Activated B cell treated with CpG ODN at 0.5 μM for 24 hours (primary cell): ENCODE measurements at regions of chrX and their contacts with region 1.

Region 1: GRCh38 chrX:9341291-9342201 is 123.3 kb upstream of the TBL1X start:
- DNase-seq: peak; percentile 51
- ATAC-seq: peak; percentile 69
- H3K4me3 Mint-ChIP-seq: peak overlapping the region; percentile 73
- H3K27ac Mint-ChIP-seq: peak overlapping the region; percentile 95
- H3K4me1 Mint-ChIP-seq: peaks cover 29% of the 10 kb centered on the region
- H3K27me3 Mint-ChIP-seq: no peaks in the 10 kb centered on the region
- CTCF ChIP-seq: no peak

Region 2: GRCh38 chrX:9091258-9091657 is 250.3 kb before region 1 on chrX:
- CTCF ChIA-PET with region 1: no interaction called
- POLR2A ChIA-PET with region 1: no interaction called
- intact Hi-C with region 1: loop called (anchors 5 kb)
- DNase-seq: peak; percentile 15
- ATAC-seq: peak; percentile 42
- H3K4me3 Mint-ChIP-seq: peak overlapping the region; percentile 15
- H3K27ac Mint-ChIP-seq: peak overlapping the region; percentile 65
- H3K4me1 Mint-ChIP-seq: peaks cover 13% of the 10 kb centered on the region
- H3K27me3 Mint-ChIP-seq: peaks cover 4% of the 10 kb centered on the region
- CTCF ChIP-seq: no peak

Region 3: GRCh38 chrX:9312922-9313867 is 28.4 kb before region 1 on chrX:
- CTCF ChIA-PET with region 1: interaction called, 4 read pairs
- POLR2A ChIA-PET with region 1: interaction called, 4 read pairs
- intact Hi-C with region 1: loop called (anchors 1 kb)
- DNase-seq: peak; percentile 39
- ATAC-seq: peak; percentile 56
- H3K4me3 Mint-ChIP-seq: no peak overlapping the region
- H3K27ac Mint-ChIP-seq: no peak overlapping the region
- H3K4me1 Mint-ChIP-seq: peaks cover 20% of the 10 kb centered on the region
- H3K27me3 Mint-ChIP-seq: no peaks in the 10 kb centered on the region
- CTCF ChIP-seq: peak; percentile 25

Region 4: GRCh38 chrX:9530848-9531274 is 189.3 kb after region 1 on chrX:
- CTCF ChIA-PET with region 1: no interaction called
- POLR2A ChIA-PET with region 1: interaction called, 3 read pairs
- intact Hi-C with region 1: loop called (anchors 5 kb)
- DNase-seq: peak; percentile 28
- ATAC-seq: peak; percentile 88
- H3K4me3 Mint-ChIP-seq: peak overlapping the region; percentile 79
- H3K27ac Mint-ChIP-seq: peak overlapping the region; percentile 80
- H3K4me1 Mint-ChIP-seq: peaks cover 73% of the 10 kb centered on the region
- H3K27me3 Mint-ChIP-seq: no peaks in the 10 kb centered on the region
- CTCF ChIP-seq: no peak

Region 5: GRCh38 chrX:9677098-9677739 is 335.7 kb after region 1 on chrX:
- CTCF ChIA-PET with region 1: no interaction called
- POLR2A ChIA-PET with region 1: interaction called, 8 read pairs
- intact Hi-C with region 1: loop called (anchors 1 kb)
- DNase-seq: no peak
- ATAC-seq: peak; percentile 89
- H3K4me3 Mint-ChIP-seq: peak overlapping the region; percentile 58
- H3K27ac Mint-ChIP-seq: peak overlapping the region; percentile 89
- H3K4me1 Mint-ChIP-seq: peaks cover 50% of the 10 kb centered on the region
- H3K27me3 Mint-ChIP-seq: no peaks in the 10 kb centered on the region
- CTCF ChIP-seq: no peak

Region 6: DNA sequence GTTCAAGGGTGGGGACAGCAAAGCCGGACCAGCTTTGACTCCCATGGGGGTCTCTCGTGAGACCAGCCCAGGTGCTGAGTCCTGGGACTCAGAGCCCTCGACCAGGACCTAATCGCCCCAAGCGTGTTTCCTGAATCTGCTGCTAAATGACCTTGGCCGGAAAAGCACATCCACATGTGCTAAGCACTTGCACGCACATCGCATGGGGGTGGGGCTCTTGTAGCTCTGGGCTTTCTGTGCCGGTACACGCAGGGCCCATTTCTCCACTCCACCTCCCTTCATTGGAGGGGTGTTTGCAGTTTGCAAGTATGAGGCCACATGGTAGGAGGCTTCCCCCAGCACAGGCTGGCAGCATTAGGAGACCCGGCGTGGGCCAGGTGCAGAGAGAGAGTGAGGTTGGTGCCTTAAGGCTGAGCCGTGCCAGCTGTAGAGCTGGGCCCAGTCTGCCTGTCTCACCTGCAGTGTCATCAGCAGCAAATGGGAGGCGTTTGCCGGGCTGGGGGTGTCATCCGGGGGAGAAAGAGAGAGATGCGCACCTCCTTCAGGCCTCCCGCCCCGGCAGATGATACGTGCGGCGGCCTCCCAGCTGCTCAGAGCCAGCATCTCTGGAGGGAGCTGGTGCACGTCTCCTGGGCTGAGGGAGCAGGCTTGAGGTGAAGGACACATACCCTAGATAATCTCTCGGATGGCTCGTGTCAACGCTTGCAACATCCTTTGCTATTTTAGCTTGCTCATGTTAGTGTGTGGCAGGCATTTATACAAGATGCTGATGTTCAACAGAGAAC is 770.0 kb after region 1 on chrX:
- CTCF ChIA-PET with region 1: no interaction called
- POLR2A ChIA-PET with region 1: interaction called, 7 read pairs
- intact Hi-C with region 1: loop called (anchors 5 kb)
- DNase-seq: peak; percentile 65
- ATAC-seq: peak; percentile 59
- H3K4me3 Mint-ChIP-seq: peak overlapping the region; percentile 84
- H3K27ac Mint-ChIP-seq: peak overlapping the region; percentile 99
- H3K4me1 Mint-ChIP-seq: peaks cover 85% of the 10 kb centered on the region
- H3K27me3 Mint-ChIP-seq: no peaks in the 10 kb centered on the region
- CTCF ChIP-seq: no peak